ENCODE measurements at regions of chr16 and their contacts with region 1.

Region 1: DNA sequence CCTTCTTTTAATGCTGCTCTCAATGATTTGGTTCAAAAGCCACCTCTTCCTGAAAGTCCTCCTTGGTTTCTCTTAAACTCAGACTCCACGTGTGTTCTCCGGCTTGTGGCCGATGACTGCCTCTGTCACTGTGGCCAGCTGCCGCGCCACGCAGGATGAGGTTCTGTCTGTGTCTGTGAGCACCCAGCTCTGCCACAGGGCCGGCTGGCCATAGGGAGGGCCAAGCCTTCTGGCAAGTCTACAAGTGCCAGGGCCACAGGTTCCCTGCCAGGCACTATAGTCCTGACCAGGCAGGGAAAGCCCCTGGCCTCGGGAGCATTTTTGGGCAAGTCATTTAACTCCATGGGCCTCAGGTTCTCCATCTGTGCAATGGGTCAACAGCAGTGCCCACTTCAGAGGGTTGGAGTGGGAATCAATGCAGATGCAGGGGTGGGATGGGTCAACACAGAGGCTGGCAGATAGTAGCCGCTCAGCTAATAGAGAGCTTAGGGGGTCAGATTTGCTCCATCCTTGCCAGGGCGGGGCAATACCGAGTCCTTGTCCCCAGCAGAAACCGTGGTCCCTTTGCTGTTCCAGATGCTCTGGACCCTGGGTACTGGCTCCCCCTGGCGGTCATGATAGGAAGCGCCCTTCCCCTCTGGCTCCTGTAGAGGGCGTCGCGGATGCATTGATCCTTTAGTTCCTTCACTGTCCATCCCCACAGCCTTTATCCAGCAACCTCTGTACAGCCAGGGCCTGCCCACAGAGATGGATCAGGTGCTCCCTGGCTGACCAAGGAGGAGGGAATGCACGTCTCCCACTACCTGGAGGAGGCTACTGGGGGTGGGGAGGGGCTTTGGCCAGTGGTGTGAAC is 19.3 kb upstream of the ADGRG3 start:
- DNase-seq: peak; percentile 86
- ATAC-seq: peak; percentile 81 to 89
- H3K4me3 ChIP-seq: no peak overlapping the region
- H3K27ac ChIP-seq: peak overlapping the region; percentile 64
- H3K4me1 ChIP-seq: peaks cover 29% of the 10 kb centered on the region
- H3K27me3 ChIP-seq: no peaks in the 10 kb centered on the region
- CTCF ChIP-seq: peak; percentile 100

Region 2: DNA sequence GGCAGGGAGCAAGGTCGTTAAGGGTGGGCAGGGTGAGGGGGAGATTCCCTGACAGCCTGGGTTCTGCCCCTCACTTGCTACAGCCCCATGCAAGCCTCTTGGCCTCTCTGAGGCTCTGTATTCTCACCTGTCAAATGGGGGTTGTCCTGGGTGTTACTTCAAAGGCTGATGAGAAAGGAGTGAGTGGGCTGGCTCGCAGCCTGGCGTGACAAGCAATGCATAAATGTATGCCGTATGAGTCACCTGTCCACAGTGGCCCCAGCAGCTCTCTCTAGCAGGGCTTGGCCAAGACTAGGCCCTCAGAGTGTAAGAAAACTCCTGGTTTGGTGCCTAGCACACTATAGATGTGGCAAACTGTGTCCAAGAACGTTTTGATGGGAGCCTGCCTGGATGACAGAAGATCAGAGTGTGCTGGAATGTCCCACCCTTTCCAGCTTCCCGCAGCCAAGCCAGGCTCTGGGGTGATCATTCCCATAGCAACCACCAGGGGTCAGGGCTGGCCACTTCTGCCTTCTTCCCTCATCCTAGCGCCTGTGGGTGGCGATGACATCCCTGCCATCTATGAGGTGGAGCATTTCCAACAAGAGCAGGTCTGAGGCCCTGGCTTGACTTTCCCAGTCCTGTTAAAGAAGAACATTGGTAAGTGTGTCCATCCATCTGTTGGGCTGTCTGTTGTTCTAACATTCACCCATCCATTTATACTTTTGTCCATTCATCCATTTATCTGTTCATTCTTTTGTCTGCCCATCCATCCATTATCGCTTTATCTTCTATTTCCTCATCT is 57.5 kb before region 1 on chr16:
- intact Hi-C with region 1: loop called (anchors 10 kb)
- DNase-seq: peak; percentile 79
- ATAC-seq: peak; percentile 92 to 93
- H3K4me3 ChIP-seq: no peak overlapping the region
- H3K27ac ChIP-seq: no peak overlapping the region
- H3K4me1 ChIP-seq: peaks cover 12% of the 10 kb centered on the region
- H3K27me3 ChIP-seq: no peaks in the 10 kb centered on the region
- CTCF ChIP-seq: peak; percentile 92

Region 3: GRCh38 chr16:57773655-57774295 is 125.0 kb after region 1 on chr16:
- intact Hi-C with region 1: no loop called
- DNase-seq: no peak
- ATAC-seq: peak; percentile 56 to 57
- H3K4me3 ChIP-seq: no peak overlapping the region
- H3K27ac ChIP-seq: no peak overlapping the region
- H3K4me1 ChIP-seq: no peaks in the 10 kb centered on the region
- H3K27me3 ChIP-seq: no peaks in the 10 kb centered on the region
- CTCF ChIP-seq: no peak